ENCODE measurements at regions of chr7 and their contacts with region 1.

Region 1: GRCh38 chr7:46695051-46695707 is 774.1 kb upstream of the IGFBP3 start:
- DNase-seq: peak; percentile 86
- H3K4me3 Mint-ChIP-seq: no peak overlapping the region
- H3K27ac Mint-ChIP-seq: peak overlapping the region; percentile 91
- H3K4me1 Mint-ChIP-seq: peaks cover 47% of the 10 kb centered on the region
- H3K27me3 Mint-ChIP-seq: no peaks in the 10 kb centered on the region
- CTCF ChIP-seq: peak; percentile 16

Region 2: DNA sequence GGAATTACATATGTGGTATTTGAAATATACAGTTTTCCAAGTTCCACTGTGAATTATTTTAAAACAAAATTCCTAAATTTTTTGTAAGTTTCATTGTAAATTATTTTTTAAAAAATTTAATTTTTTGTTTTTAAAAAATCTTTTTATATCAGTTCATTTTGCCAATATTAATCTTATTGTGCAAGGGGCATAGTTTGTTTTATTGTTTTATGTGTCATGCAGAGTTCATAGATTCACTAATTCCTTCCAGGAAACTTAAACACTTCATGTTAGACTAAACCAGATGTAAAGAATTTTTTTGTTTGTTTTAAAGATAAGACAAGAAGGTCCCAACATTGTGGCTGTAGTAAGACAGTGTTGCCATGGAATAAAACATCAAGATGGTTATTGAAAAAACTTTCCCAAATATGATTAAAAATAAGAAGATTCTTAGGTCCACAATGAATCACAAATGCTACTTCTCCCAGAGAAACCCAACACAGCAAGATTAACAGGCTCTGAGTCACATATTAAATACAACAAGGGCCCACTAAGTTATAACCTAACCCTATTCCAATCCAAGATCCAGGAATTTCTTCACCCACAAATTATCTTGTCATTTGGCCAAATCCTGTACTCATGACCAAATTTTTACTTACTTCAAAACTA is 309.4 kb before region 1 on chr7:
- CTCF ChIA-PET with region 1: no interaction called
- intact Hi-C with region 1: loop called (anchors 10 kb)
- DNase-seq: no peak
- H3K4me3 Mint-ChIP-seq: no peak overlapping the region
- H3K27ac Mint-ChIP-seq: peak overlapping the region; percentile 65
- H3K4me1 Mint-ChIP-seq: peaks cover 28% of the 10 kb centered on the region
- H3K27me3 Mint-ChIP-seq: no peaks in the 10 kb centered on the region
- CTCF ChIP-seq: no peak

Region 3: GRCh38 chr7:46494026-46494425 is 201.2 kb before region 1 on chr7:
- CTCF ChIA-PET with region 1: no interaction called
- intact Hi-C with region 1: loop called (anchors 2 kb)
- DNase-seq: no peak
- H3K4me3 Mint-ChIP-seq: no peak overlapping the region
- H3K27ac Mint-ChIP-seq: peak overlapping the region; percentile 82
- H3K4me1 Mint-ChIP-seq: peaks cover 35% of the 10 kb centered on the region
- H3K27me3 Mint-ChIP-seq: no peaks in the 10 kb centered on the region
- CTCF ChIP-seq: no peak

Region 4: GRCh38 chr7:46764100-46764936 is 69.1 kb after region 1 on chr7:
- CTCF ChIA-PET with region 1: interaction called, 3 read pairs
- intact Hi-C with region 1: loop called (anchors 1 kb)
- DNase-seq: peak; percentile 90
- H3K4me3 Mint-ChIP-seq: peak overlapping the region; percentile 4
- H3K27ac Mint-ChIP-seq: peak overlapping the region; percentile 80
- H3K4me1 Mint-ChIP-seq: peaks cover 30% of the 10 kb centered on the region
- H3K27me3 Mint-ChIP-seq: no peaks in the 10 kb centered on the region
- CTCF ChIP-seq: no peak

Region 5: DNA sequence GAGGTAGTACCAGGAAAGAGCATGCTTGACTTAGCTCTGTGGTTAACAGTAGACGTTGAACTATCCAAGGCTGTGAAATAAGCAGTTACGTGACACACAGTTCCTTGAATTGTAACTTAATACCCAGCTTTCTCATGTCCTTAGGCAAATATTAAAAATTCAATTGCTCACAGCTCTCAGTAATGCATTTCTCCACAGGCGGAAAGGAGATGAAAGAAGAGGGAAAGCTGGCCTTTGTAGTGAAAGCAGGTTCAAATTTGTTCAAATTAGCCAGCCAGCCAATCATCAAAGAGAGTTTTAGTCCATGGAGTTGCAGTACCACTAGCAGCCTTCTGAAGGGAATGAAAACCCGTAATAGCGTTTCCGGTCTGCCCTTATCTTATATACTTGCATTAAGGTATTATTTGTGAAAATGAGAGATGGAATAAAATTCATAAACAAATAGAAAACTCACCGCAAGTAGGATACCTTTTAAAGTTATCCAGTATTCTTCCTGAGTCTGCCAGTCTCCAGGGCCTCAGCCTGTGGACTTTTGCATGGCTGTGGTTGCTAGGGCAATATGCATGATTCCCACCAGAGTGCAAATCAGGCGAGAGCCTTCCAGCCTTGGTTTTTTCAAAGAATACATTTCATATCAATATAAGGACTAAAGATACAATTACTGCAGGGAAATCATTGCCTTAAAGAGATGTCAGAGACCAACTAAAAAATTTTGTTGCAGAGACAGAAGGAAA is 91.2 kb after region 1 on chr7:
- CTCF ChIA-PET with region 1: interaction called, 10 read pairs
- intact Hi-C with region 1: loop called (anchors 1 kb)
- DNase-seq: peak; percentile 69
- H3K4me3 Mint-ChIP-seq: peak overlapping the region; percentile 45
- H3K27ac Mint-ChIP-seq: peak overlapping the region; percentile 95
- H3K4me1 Mint-ChIP-seq: peaks cover 29% of the 10 kb centered on the region
- H3K27me3 Mint-ChIP-seq: no peaks in the 10 kb centered on the region
- CTCF ChIP-seq: no peak

Region 6: DNA sequence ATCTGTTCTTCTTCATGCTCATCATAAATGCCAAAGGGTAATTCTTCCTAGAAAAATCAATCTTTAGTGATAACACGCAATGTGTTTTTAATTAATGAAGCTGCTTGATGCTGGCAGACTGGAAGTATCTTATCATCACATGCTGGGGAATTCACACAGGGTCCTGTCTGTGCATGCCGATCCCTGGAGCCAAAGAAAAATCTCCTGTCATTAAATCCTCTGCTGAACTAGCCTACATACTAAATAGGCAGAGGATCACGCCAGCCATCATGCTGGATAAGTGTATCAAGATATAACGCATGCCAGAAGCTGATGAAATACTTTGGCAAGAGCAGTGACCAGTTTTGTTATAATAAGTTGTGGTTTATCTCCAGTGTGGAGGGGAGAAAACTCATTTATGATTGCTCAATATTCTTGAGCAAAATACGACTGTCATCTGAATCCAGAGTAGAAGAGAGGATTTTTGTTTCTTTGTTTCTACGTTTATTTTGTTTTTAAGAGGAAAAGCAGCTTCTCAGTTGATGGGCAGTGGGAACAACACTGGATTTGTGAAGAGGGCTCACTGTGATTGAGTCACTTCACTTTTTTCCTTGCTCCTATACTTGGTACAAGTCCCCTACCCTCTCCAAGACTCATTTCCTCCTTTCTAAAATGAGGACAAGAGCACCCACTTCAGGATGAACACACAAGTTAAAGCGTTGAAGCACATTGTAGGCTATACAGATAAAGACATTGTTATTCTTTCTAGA is 237.7 kb after region 1 on chr7:
- CTCF ChIA-PET with region 1: no interaction called
- intact Hi-C with region 1: loop called (anchors 2 kb)
- DNase-seq: peak; percentile 41
- H3K4me3 Mint-ChIP-seq: peak overlapping the region; percentile 18
- H3K27ac Mint-ChIP-seq: peak overlapping the region; percentile 99
- H3K4me1 Mint-ChIP-seq: peaks cover 59% of the 10 kb centered on the region
- H3K27me3 Mint-ChIP-seq: no peaks in the 10 kb centered on the region
- CTCF ChIP-seq: no peak

Region 7: DNA sequence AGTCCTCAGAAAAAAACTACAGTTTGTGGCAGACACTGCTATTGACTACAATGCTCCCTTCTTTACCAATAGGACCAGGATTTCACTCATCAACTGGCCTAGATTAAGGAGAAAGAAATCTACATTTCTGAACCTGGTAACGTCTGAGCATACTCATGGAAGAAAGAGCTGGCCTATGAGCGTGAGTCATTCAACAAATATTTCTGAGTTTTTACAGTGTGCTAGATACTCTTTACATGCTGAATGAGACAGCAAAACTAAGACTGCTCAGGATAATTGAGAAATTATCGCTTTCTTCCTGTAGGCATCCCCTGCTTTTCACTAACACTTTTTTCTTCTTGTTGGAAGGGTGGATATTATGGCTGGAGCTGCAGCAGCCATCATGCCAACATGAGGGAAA is 277.0 kb after region 1 on chr7:
- CTCF ChIA-PET with region 1: no interaction called
- intact Hi-C with region 1: loop called (anchors 2 kb)
- DNase-seq: peak; percentile 25
- H3K4me3 Mint-ChIP-seq: no peak overlapping the region
- H3K27ac Mint-ChIP-seq: peak overlapping the region; percentile 100
- H3K4me1 Mint-ChIP-seq: peaks cover 54% of the 10 kb centered on the region
- H3K27me3 Mint-ChIP-seq: no peaks in the 10 kb centered on the region
- CTCF ChIP-seq: no peak